Activated T-helper 1 cell treated with anti-CD3 and anti-CD28 coated beads, Interleukin-12 subunit alpha, Interleukin-12 subunit beta, Interleukin-2, Interleukin-4 antibody, amounts not matched to agents 30 ng/mL and 10 ng/mL and 1 ng/mL, durations not matched to agents 14 hours and 24 hours and 36 hours (primary cell): ENCODE measurements at regions of chr2 and their contacts with region 1.

Region 1: GRCh38 chr2:989781-990467 is 39.3 kb downstream of the SNTG2 start:
- DNase-seq: no peak
- H3K4me3 Mint-ChIP-seq: no peak overlapping the region
- H3K27ac Mint-ChIP-seq: no peak overlapping the region
- H3K4me1 Mint-ChIP-seq: no peaks in the 10 kb centered on the region
- H3K27me3 Mint-ChIP-seq: peaks cover under 1% of the 10 kb centered on the region

Region 2: GRCh38 chr2:1010415-1010930 is 20.5 kb after region 1 on chr2:
- intact Hi-C with region 1: loop called (anchors 1 kb)
- DNase-seq: no peak
- H3K4me3 Mint-ChIP-seq: no peak overlapping the region
- H3K27ac Mint-ChIP-seq: no peak overlapping the region
- H3K4me1 Mint-ChIP-seq: no peaks in the 10 kb centered on the region
- H3K27me3 Mint-ChIP-seq: peaks cover 3% of the 10 kb centered on the region

Region 3: DNA sequence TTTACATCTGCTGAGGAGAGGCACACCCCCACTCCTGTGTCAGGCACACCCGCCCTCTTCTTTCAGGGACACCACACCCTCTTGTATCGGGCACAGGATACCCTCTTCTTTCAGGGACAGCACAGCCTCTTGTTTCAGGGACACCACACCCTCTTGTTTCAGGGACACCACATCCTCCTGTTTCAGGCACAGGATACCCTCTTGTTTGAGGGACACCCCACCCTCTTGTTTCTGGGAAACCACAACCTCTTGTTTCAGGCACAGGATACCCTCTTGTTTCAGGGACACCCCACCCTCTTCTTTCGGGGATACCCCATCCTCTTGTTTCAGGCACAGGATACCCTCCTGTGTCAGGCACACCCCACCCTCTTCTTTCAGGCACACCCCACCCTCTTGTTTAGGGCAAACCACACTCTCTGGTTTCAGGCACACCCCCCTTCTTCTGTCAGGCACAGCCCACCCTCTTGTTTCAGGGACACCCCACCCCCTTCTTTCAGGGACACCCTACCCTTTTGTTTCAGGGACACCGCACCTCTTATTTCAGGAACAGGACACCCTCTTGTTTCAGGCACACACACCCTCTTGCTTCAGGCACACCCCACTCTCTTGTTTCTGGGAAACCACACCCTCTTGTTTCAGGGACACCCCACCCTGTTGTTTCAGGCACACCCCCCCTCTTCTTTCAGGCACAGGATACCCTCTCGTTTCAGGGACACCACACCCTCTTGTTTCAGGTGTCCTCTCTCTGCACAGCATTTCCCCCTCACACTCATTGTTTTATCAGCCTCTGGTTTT is 519.5 kb after region 1 on chr2:
- intact Hi-C with region 1: no loop called
- DNase-seq: peak; percentile 29
- H3K4me3 Mint-ChIP-seq: peak overlapping the region; percentile 15
- H3K27ac Mint-ChIP-seq: peak overlapping the region; percentile 42
- H3K4me1 Mint-ChIP-seq: peaks cover 27% of the 10 kb centered on the region
- H3K27me3 Mint-ChIP-seq: peaks cover 2% of the 10 kb centered on the region